ENCODE measurements at regions of chr9 and their contacts with region 1.

Region 1: GRCh38 chr9:86948074-86948929 is 996 bp upstream of the GAS1 start:
- DNase-seq: peak; percentile 92
- H3K4me3 ChIP-seq: peak overlapping the region; percentile 72 to 91 (median 88)
- H3K27ac ChIP-seq: peak overlapping the region; percentile 93 to 95 (median 94)
- H3K4me1 ChIP-seq: peaks cover 0 to 28% (median 17%) of the 10 kb centered on the region in 4 donors
- H3K27me3 ChIP-seq: no peaks in the 10 kb centered on the region
- CTCF ChIP-seq: peak; percentile 88 to 98 (median 94)
- EP300 ChIP-seq: peak in 1 of 4 donors; percentile 8
- POLR2A ChIP-seq: no peak

Region 2: GRCh38 chr9:86434039-86434726 is 514.1 kb before region 1 on chr9:
- intact Hi-C with region 1: loop called (anchors 5 kb)
- DNase-seq: peak; percentile 86
- H3K4me3 ChIP-seq: no peak overlapping the region
- H3K27ac ChIP-seq: peak overlapping the region in 3 of 4 donors; percentile 14 to 49 (median 26)
- H3K4me1 ChIP-seq: peaks cover 0 to 9% (median 4%) of the 10 kb centered on the region in 4 donors
- H3K27me3 ChIP-seq: no peaks in the 10 kb centered on the region
- CTCF ChIP-seq: peak; percentile 73 to 78 (median 75)
- EP300 ChIP-seq: no peak
- POLR2A ChIP-seq: no peak

Region 3: GRCh38 chr9:86580688-86581087 is 367.6 kb before region 1 on chr9:
- intact Hi-C with region 1: loop called (anchors 5 kb)
- DNase-seq: peak; percentile 73
- H3K4me3 ChIP-seq: no peak overlapping the region
- H3K27ac ChIP-seq: peak overlapping the region in 3 of 4 donors; percentile 66 to 76 (median 68)
- H3K4me1 ChIP-seq: peaks cover 0 to 25% (median 17%) of the 10 kb centered on the region in 4 donors
- H3K27me3 ChIP-seq: no peaks in the 10 kb centered on the region
- CTCF ChIP-seq: no peak
- EP300 ChIP-seq: no peak
- POLR2A ChIP-seq: no peak

Region 4: DNA sequence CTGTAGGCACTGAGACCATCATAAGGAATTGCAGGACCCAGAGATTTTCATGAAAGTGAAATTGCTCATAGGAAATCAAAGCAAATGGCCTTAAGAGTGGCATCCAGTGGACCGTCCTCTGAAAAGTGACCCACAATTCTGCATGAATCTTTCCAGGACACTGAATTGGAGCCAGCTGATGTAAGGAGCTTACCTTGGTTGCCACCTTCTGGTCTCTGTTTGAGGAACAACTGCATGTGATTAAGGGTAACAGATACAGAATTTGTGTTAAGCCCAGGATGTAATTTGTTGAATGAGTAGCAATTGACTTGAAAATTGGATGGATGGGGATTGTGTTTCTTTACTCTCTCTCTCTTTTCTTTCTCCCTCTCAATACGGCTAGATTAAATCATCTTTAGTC is 48.9 kb after region 1 on chr9:
- intact Hi-C with region 1: loop called (anchors 5 kb)
- DNase-seq: no peak
- H3K4me3 ChIP-seq: no peak overlapping the region
- H3K27ac ChIP-seq: no peak overlapping the region
- H3K4me1 ChIP-seq: no peaks in the 10 kb centered on the region
- H3K27me3 ChIP-seq: no peaks in the 10 kb centered on the region
- CTCF ChIP-seq: peak in 1 of 4 experiments; percentile 9
- EP300 ChIP-seq: no peak
- POLR2A ChIP-seq: no peak

Region 5: GRCh38 chr9:87148331-87149104 is 200.2 kb after region 1 on chr9:
- intact Hi-C with region 1: loop called (anchors 5 kb)
- DNase-seq: peak; percentile 91
- H3K4me3 ChIP-seq: peak overlapping the region; percentile 20 to 51 (median 40)
- H3K27ac ChIP-seq: peak overlapping the region; percentile 83 to 95 (median 92)
- H3K4me1 ChIP-seq: peaks cover 0 to 22% (median 17%) of the 10 kb centered on the region in 4 donors
- H3K27me3 ChIP-seq: no peaks in the 10 kb centered on the region
- CTCF ChIP-seq: peak in 1 of 4 experiments; percentile 16
- EP300 ChIP-seq: peak in 2 of 4 donors; percentile 4 to 23
- POLR2A ChIP-seq: no peak

Region 6: DNA sequence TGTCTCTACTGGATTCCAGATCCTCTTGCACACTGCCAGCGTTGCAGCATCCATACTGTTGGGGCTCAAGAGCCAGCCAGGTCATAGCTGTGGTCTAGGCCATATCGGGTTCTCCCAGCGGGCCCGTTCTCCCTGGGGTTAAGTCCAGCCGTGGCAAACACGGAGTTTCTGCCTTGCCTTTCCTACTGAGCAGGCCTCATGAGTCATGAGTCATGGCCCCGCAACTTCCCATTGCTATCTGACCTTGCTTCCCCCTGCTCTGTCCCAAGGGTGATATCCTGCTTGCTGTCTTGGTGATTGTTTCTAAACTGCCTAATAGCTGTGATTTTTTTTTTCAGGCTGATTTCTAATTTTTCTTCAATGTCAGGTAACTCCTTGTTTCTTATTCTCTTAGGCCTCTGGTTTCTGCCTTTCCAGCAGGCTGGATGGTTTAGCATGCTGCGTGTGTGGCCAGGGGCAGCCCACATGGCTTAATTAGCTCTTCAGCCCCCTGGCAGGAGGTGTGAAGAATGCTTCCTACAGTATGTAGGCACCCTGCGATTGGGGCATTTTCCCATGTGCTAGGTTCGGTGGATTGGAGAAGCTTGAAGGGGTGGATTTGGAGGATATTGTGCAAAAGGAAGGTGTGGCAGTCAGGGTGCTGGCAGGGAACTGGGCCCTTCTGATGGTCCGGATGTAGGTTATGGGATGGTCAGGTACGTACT is 568.1 kb after region 1 on chr9:
- intact Hi-C with region 1: loop called (anchors 10 kb)
- DNase-seq: peak; percentile 86
- H3K4me3 ChIP-seq: no peak overlapping the region
- H3K27ac ChIP-seq: peak overlapping the region; percentile 39 to 84 (median 68)
- H3K4me1 ChIP-seq: peaks cover 0 to 86% (median 70%) of the 10 kb centered on the region in 4 donors
- H3K27me3 ChIP-seq: no peaks in the 10 kb centered on the region
- CTCF ChIP-seq: no peak
- EP300 ChIP-seq: no peak
- POLR2A ChIP-seq: no peak

Measured in sigmoid colon (tissue), 7 donors.